ENCODE measurements at regions of chr2 and their contacts with region 1.

Region 1: DNA sequence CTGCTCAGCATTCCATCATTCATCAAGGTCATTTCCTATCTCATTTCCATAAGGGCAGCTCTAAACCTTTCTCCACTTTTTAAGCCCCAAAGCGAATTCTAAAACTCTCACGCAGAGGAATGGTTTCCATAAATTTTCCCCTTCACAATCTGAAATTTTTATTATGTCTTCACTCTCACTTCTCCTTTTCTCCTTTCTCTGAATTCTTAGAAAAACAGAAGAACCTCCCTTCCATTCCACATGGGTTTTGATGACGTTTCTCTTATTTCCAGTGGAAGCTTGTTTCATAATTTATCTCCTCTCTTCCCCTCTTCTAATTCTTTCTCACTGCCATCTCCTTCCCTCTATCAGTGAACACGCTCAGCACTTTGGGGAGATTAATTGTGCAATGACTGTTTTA is 97.3 kb downstream of the SPATS2L start:
- DNase-seq: no peak
- ATAC-seq: no peak
- H3K4me3 ChIP-seq: no peak overlapping the region
- H3K4me3 Mint-ChIP-seq: no peak overlapping the region
- H3K27ac ChIP-seq: no peak overlapping the region
- H3K27ac Mint-ChIP-seq: no peak overlapping the region
- H3K4me1 ChIP-seq: peaks cover 9% of the 10 kb centered on the region
- H3K4me1 Mint-ChIP-seq: no peaks in the 10 kb centered on the region
- H3K27me3 ChIP-seq: no peaks in the 10 kb centered on the region
- H3K27me3 Mint-ChIP-seq: no peaks in the 10 kb centered on the region
- CTCF ChIP-seq: no peak

Region 2: GRCh38 chr2:200345975-200346374 is 57.8 kb before region 1 on chr2:
- CTCF ChIA-PET with region 1: no interaction called
- POLR2A ChIA-PET with region 1: no interaction called
- intact Hi-C with region 1: loop called in 1 of 2 experiments (anchors 5 kb)
- DNase-seq: no peak
- ATAC-seq: no peak
- H3K4me3 ChIP-seq: no peak overlapping the region
- H3K4me3 Mint-ChIP-seq: no peak overlapping the region
- H3K27ac ChIP-seq: no peak overlapping the region
- H3K27ac Mint-ChIP-seq: no peak overlapping the region
- H3K4me1 ChIP-seq: no peaks in the 10 kb centered on the region
- H3K4me1 Mint-ChIP-seq: no peaks in the 10 kb centered on the region
- H3K27me3 ChIP-seq: no peaks in the 10 kb centered on the region
- H3K27me3 Mint-ChIP-seq: no peaks in the 10 kb centered on the region
- CTCF ChIP-seq: no peak

Region 3: DNA sequence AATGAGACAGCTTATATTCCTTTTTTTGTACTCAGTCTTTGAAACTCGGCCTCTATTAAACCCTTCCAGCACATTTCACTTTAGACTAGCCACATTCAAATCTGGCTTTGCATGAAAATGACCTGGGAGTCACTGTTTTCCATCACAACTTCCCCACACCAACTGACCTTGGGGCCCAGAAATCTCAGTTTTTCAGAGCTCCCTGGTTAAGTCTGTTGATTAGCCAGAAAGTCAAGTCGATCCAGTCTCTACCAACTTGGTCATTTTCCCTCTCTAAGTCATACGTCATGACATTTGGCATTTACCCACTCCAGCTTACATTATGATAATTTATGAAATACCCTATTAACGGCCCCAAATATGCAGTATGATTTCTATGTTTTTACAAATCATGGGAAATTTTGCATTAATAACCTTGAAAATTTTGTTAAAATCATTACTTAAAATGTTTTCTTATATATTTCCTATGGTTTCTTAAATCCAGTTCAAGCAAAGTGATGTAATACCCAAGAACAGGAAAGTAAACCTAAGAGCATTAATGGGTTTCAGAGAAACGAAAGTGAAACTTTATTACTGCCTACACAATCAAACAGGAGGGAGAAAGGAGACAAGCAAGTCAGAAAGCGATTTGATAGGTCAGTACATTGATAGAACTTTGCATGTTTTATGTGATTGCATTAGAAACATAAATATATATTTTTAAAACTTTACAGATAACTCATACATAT is 20.3 kb before region 1 on chr2:
- CTCF ChIA-PET with region 1: no interaction called
- POLR2A ChIA-PET with region 1: no interaction called
- intact Hi-C with region 1: no loop called
- DNase-seq: peak in 3 of 14 experiments; percentile 61 to 83 (median 63)
- ATAC-seq: peak; percentile 90
- H3K4me3 ChIP-seq: peak overlapping the region; percentile 27
- H3K4me3 Mint-ChIP-seq: peak overlapping the region; percentile 26
- H3K27ac ChIP-seq: peak overlapping the region in 1 of 2 donors; percentile 16
- H3K27ac Mint-ChIP-seq: peak overlapping the region; percentile 70
- H3K4me1 ChIP-seq: peaks cover 11% of the 10 kb centered on the region
- H3K4me1 Mint-ChIP-seq: peaks cover 38% of the 10 kb centered on the region
- H3K27me3 ChIP-seq: no peaks in the 10 kb centered on the region
- H3K27me3 Mint-ChIP-seq: no peaks in the 10 kb centered on the region
- CTCF ChIP-seq: no peak